OCI-LY7 (cell line): ENCODE measurements at regions of chr10 and their contacts with region 1.

Region 1: DNA sequence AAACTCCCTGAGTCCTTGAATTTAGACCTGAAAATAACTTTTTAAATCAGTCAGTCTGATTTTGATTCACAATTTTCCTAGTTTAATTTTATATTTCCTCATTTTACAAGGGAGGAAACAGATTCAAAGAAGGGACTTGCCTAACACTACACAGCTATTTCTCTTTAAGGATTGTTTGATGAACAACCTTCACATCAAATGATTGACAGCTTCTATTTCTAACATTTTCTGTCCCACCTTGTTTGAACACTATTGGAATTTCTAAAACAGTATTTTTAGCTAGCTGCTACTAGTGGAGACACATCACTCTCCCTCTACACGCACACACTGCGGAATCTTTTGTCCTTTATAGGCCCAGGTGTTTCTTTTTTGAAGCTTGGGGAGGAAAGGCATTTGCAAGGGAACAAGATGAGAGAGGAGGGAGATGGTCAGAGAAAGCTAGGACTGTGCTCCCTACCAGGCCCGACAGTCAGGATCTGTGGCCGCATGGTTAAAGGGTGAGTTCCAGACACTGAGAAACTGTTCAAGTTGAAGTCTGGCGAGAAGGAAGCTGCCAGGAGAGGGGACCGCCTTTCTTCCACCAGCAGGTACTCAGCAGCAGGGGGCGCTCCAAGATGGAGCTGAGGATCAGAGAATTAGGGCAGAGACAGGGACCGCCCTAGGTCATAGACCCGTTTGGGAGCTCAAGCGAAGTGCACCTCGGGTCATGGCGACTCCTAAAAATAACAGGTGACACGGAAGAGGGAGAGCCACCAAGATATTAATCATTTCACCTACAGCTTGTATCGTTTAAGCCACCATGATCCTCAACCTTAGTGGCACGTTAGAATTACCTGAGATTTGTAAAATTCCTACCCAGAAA is 49.7 kb downstream of the DNAJC12 start:
- DNase-seq: peak; percentile 84
- H3K4me3 ChIP-seq: peak overlapping the region; percentile 30
- H3K27ac ChIP-seq: no peak overlapping the region
- H3K4me1 ChIP-seq: peaks cover 42% of the 10 kb centered on the region
- CTCF ChIP-seq: peak; percentile 96

Region 2: GRCh38 chr10:67242528-67242927 is 545.7 kb before region 1 on chr10:
- CTCF ChIA-PET with region 1: no interaction called
- POLR2A ChIA-PET with region 1: no interaction called
- intact Hi-C with region 1: no loop called
- DNase-seq: no peak
- H3K4me3 ChIP-seq: no peak overlapping the region
- H3K27ac ChIP-seq: no peak overlapping the region
- H3K4me1 ChIP-seq: no peaks in the 10 kb centered on the region
- CTCF ChIP-seq: no peak

Region 3: GRCh38 chr10:67849331-67850011 is 61.2 kb after region 1 on chr10:
- CTCF ChIA-PET with region 1: interaction called, 11 read pairs
- POLR2A ChIA-PET with region 1: interaction called, 7 read pairs
- intact Hi-C with region 1: loop called (anchors 2 kb)
- DNase-seq: peak; percentile 92
- H3K4me3 ChIP-seq: peak overlapping the region; percentile 92
- H3K27ac ChIP-seq: peak overlapping the region; percentile 52
- H3K4me1 ChIP-seq: peaks cover 4% of the 10 kb centered on the region
- CTCF ChIP-seq: no peak

Region 4: GRCh38 chr10:67878133-67878532 is 89.9 kb after region 1 on chr10:
- CTCF ChIA-PET with region 1: no interaction called
- POLR2A ChIA-PET with region 1: no interaction called
- intact Hi-C with region 1: no loop called
- DNase-seq: no peak
- H3K4me3 ChIP-seq: no peak overlapping the region
- H3K27ac ChIP-seq: no peak overlapping the region
- H3K4me1 ChIP-seq: no peaks in the 10 kb centered on the region
- CTCF ChIP-seq: no peak

Region 5: GRCh38 chr10:68074775-68075549 is 286.7 kb after region 1 on chr10 and contains the start of gene HERC4:
- CTCF ChIA-PET with region 1: no interaction called
- POLR2A ChIA-PET with region 1: interaction called, 4 read pairs
- intact Hi-C with region 1: loop called (anchors 5 kb)
- DNase-seq: peak; percentile 91
- H3K4me3 ChIP-seq: peak within 1 kb of the TSS; percentile 85
- H3K27ac ChIP-seq: peak within 1 kb of the TSS; percentile 83
- H3K4me1 ChIP-seq: peaks cover 15% of the 10 kb centered on the region
- CTCF ChIP-seq: no peak
- total RNA-seq, gene HERC4: 34.2 and 36.1 TPM in 2 replicates

Region 6: GRCh38 chr10:68208424-68209042 is 420.3 kb after region 1 on chr10:
- CTCF ChIA-PET with region 1: interaction called, 4 read pairs
- POLR2A ChIA-PET with region 1: interaction called, 3 read pairs
- intact Hi-C with region 1: loop called (anchors 1 kb)
- DNase-seq: peak; percentile 70
- H3K4me3 ChIP-seq: no peak overlapping the region
- H3K27ac ChIP-seq: no peak overlapping the region
- H3K4me1 ChIP-seq: peaks cover 18% of the 10 kb centered on the region
- CTCF ChIP-seq: peak; percentile 79

Region 7: GRCh38 chr10:68218786-68219185 is 430.5 kb after region 1 on chr10:
- CTCF ChIA-PET with region 1: no interaction called
- POLR2A ChIA-PET with region 1: no interaction called
- intact Hi-C with region 1: no loop called
- DNase-seq: no peak
- H3K4me3 ChIP-seq: no peak overlapping the region
- H3K27ac ChIP-seq: no peak overlapping the region
- H3K4me1 ChIP-seq: no peaks in the 10 kb centered on the region
- CTCF ChIP-seq: no peak

Region 8: DNA sequence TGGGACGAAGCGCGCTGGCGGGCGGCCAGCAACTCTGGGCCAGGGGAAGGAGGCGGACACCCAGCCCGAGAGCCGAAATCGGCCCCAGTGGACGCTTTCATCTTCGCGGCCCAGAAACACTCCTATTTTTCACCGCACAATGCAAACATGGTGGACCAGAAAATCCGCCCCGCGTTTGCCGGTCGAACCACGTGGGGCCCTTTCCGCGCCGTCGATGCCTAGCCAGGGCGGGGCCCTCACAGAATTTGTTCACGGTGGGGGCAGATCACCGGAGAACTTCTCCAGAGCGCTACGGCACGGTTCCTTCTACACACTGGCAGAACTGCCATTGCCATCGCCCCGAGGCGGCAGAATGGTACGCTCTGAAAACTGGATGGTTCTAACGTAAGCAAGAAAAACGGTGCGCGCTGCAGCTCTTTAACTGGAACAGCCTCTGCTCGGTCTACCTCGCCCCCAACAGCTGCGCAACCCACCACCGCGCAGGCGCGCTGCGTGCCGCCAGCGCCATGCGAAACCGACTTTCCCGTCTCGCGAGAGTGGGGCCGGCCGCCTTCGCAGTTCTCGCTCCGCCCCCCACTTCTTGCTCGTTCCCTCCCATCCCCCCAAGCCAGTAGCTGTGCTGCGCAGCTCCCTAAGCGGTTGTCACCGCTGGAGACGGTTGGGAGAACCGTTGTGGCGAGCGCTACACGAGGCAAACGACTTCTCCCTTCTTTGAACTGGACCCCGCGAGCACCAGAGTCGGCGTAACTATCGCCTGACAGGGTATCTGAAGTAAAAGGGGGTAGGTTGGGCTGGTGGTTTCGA is 543.4 kb after region 1 on chr10 and contains the start of gene HNRNPH3:
- CTCF ChIA-PET with region 1: interaction called, 14 read pairs
- POLR2A ChIA-PET with region 1: interaction called, 3 read pairs
- intact Hi-C with region 1: no loop called
- DNase-seq: peak; percentile 99
- H3K4me3 ChIP-seq: peak within 1 kb of the TSS; percentile 85
- H3K27ac ChIP-seq: peak within 1 kb of the TSS; percentile 89
- H3K4me1 ChIP-seq: peaks cover 65% of the 10 kb centered on the region
- CTCF ChIP-seq: no peak
- total RNA-seq, gene HNRNPH3: 30.8 and 69.2 TPM in 2 replicates